AG04449 (cell line): ENCODE measurements at regions of chr17 and their contacts with region 1.

Region 1: GRCh38 chr17:79741751-79742588 is 11.2 kb downstream of the ENPP7 start:
- DNase-seq: no peak
- H3K4me3 ChIP-seq: no peak overlapping the region
- CTCF ChIP-seq: peak; percentile 95

Region 2: GRCh38 chr17:79612468-79613194 is 129.3 kb before region 1 on chr17:
- CTCF ChIA-PET with region 1: no interaction called
- POLR2A ChIA-PET with region 1: no interaction called
- DNase-seq: no peak
- H3K4me3 ChIP-seq: no peak overlapping the region
- CTCF ChIP-seq: peak; percentile 43

Region 3: DNA sequence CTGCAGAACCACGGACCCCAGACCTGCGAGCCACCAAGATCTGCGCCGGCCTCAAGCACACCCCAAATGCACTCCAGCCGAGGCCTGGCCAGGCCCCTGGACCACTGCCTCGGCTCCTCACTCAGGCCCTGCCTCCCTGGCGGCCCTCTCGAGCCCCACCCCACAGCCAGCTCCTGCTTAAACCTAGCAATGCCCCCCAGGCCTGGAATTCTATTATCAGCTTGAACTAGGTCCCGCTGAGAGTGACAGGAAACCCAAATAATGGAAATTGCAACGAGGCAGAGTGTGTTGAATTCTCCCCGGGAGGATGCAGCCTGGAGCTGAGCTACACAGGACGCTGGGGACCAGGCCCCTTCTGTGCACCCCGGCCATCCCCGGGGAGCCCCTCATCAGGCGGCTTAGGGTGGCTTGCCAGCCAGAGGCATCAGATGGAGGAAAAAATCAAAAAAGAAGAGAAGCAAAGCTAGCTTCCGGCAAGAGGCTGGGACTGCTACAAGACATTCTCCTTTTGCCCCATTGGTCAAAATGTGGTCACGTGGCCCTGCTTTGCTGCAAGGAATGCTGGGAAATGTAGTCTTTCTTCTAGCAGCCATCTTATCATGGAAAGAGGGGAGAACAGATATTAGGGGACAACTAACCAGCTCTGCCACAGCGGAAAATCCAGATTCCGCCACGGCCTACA is 13.6 kb before region 1 on chr17:
- CTCF ChIA-PET with region 1: interaction called, 30 read pairs
- POLR2A ChIA-PET with region 1: no interaction called
- DNase-seq: peak; percentile 52
- H3K4me3 ChIP-seq: peak overlapping the region; percentile 32; the same call in 1 of the 2 replicates
- CTCF ChIP-seq: no peak

Region 4: DNA sequence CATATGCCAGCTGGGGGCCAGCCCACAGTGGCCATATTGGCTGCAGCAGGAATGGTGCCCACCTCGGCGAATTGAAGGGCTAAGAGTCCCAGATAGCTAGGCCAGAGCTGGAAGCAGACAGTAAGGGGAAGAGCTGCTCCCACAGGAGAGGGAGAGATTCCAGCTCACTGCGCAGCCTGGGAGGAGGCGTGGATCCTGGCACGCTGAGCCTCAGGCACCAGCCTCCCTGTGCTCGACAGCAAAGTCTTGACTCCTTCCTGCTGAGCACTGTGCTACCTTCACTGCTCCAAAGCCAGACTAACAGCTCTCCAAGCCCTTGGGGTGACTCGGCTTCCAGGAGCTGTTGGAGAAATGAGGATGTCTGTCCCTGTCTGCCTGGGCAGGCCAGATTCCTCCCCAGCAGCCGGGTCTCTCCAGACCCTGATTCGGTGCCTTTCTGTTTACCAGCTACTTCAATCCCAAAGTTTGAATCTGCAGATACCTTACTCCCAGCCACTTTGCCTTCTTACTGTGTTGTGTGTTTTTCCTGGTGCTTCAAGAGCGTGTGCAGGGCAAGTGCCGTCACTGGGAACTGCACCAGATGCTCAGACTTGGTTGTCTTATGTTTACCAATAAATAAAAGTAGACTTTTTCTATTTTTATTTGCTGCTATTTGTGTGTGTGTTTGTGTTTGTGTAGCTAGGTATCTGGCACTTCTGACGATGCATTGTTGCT is 45.1 kb after region 1 on chr17:
- CTCF ChIA-PET with region 1: no interaction called
- POLR2A ChIA-PET with region 1: no interaction called
- DNase-seq: no peak
- H3K4me3 ChIP-seq: no peak overlapping the region
- CTCF ChIP-seq: no peak

Region 5: GRCh38 chr17:79915850-79916430 is 174.0 kb after region 1 on chr17:
- CTCF ChIA-PET with region 1: interaction called, 13 read pairs
- POLR2A ChIA-PET with region 1: no interaction called
- DNase-seq: no peak
- H3K4me3 ChIP-seq: no peak overlapping the region
- CTCF ChIP-seq: peak; percentile 25